ENCODE measurements at regions of chr5 and their contacts with region 1.

Region 1: GRCh38 chr5:32709781-32710549 is 1.2 kb upstream of the NPR3 start:
- DNase-seq: peak; percentile 36 to 74 (median 54)
- ATAC-seq: peak; percentile 69 to 81 (median 78)
- H3K4me3 ChIP-seq: peak overlapping the region; percentile 16 to 75 (median 39)
- H3K27ac ChIP-seq: peak overlapping the region in 2 of 4 donors; percentile 43 to 50
- H3K4me1 ChIP-seq: peaks cover 0 to 8% (median 5%) of the 10 kb centered on the region in 3 donors
- H3K27me3 ChIP-seq: peaks cover 0 to 5% (median 0%) of the 10 kb centered on the region in 4 donors
- CTCF ChIP-seq: peak; percentile 20 to 55 (median 50)

Region 2: DNA sequence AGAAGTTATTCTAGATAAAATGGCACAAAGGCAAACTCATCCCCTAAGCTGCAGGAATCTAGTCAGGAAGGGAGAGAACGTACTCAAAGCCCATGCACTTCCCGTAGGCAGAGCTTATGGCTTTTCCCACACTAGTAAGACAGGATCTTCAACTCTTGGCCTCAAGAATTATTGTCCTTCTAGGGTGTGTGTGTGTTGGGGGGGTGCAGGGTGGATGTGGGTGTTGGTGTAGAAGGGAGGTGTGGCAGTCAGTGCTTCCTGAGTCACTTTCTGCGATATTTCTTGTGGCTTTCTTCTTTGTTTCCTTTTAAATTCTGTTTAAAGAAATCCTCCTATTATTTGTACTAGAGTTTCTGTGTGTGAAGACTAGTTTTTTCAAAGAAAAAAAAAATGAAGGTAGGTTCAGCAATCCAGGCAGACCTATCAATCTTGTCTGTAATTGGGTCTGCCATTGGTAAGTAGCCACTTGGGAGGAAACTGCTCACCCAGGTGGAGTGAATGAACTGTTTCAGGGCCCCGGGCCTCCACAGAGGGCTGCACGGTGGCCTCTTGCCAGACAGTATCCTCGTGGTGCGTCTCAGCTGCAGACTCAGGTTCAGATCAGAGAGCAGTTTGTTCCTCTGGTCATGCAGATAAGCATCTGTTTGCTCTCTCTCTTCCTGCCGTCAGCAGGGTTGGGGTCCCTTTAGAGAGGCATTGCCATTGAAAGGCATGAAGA is 133.0 kb after region 1 on chr5:
- intact Hi-C with region 1: loop called in 1 of 3 experiments (anchors 10 kb)
- DNase-seq: no peak
- ATAC-seq: peak in 2 of 4 donors; percentile 44 to 48
- H3K4me3 ChIP-seq: no peak overlapping the region
- H3K27ac ChIP-seq: no peak overlapping the region
- H3K4me1 ChIP-seq: no peaks in the 10 kb centered on the region
- H3K27me3 ChIP-seq: no peaks in the 10 kb centered on the region
- CTCF ChIP-seq: no peak

Region 3: DNA sequence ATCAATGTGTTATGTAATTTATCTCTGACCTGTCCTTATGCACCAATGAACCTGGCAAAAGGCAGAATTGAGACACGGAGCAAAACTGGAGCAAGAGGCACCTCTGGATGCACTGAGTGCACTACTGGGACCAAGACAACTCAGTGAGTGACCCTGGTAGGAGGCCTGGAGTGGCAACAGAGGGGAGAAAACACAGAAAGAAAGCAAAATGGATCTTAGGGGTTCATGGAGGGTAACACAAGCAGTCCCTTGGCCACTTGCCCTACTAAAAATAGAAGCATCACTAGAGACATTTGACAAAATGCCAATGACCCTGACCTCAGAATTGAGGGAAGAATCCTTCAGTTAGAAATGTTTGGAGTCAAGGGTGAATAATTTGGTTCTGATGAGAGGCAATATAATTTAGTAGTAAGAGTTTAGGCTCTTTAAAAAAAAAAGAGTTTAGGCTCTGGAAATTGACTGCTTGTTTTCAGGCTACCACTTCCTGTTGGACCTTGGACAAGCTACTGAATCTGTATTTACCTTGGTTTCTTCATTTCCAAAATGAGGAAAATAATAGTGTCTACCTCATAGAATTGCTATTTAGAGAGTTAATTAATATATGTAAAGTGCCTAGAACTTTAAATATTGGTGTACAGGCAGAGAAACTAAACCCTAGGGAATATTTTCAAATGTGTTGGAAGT is 495.9 kb after region 1 on chr5:
- intact Hi-C with region 1: no loop called
- DNase-seq: no peak
- ATAC-seq: no peak
- H3K4me3 ChIP-seq: no peak overlapping the region
- H3K27ac ChIP-seq: no peak overlapping the region
- H3K4me1 ChIP-seq: peaks cover 0 to 3% (median 0%) of the 10 kb centered on the region in 3 donors
- H3K27me3 ChIP-seq: no peaks in the 10 kb centered on the region
- CTCF ChIP-seq: no peak

Measured in pancreas (tissue), 10 donors.